Lower leg skin (tissue), 4 donors: ENCODE measurements at regions of chr7 and their contacts with region 1.

Region 1: GRCh38 chr7:136605532-136606329 is 262.7 kb upstream of the CHRM2 start:
- DNase-seq: no peak
- H3K4me3 ChIP-seq: no peak overlapping the region
- CTCF ChIP-seq: no peak
- POLR2A ChIP-seq: no peak

Region 2: GRCh38 chr7:136617176-136617575 is 11.4 kb after region 1 on chr7:
- intact Hi-C with region 1: loop called (anchors 2 kb)
- DNase-seq: no peak
- H3K4me3 ChIP-seq: no peak overlapping the region
- CTCF ChIP-seq: no peak
- POLR2A ChIP-seq: no peak

Region 3: GRCh38 chr7:137360087-137360679 is 754.5 kb after region 1 on chr7:
- intact Hi-C with region 1: no loop called
- DNase-seq: no peak
- H3K4me3 ChIP-seq: no peak overlapping the region
- CTCF ChIP-seq: no peak
- POLR2A ChIP-seq: no peak